ENCODE measurements at regions of chr12 and their contacts with region 1.

Region 1: DNA sequence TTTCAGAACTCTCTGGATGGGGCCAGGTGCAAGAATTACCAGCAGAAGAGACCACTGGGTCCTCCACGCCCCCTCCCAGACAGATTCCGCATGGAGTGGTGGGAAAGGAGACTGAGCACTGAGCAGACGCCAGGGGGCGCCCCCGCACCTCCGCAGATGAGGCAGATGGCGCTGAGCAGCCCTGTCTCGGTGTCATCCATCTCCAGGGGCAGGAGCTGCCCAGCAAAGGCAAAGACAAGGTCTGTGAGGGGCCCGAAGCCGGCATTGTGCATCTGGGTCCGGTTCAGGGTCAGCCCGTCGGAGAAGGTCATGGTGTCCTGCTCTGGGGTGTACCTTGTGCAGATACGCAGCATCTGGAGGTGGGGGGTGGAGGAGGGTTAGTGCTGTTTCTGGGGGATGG is 6.3 kb upstream of the ITGB7 start:
- DNase-seq: peak; percentile 81 to 91
- ATAC-seq: peak; percentile 79 to 92
- H3K4me3 ChIP-seq: no peak overlapping the region
- H3K27ac ChIP-seq: no peak overlapping the region
- H3K4me1 ChIP-seq: peaks cover 21% of the 10 kb centered on the region
- CTCF ChIP-seq: peak; percentile 97
- EP300 ChIP-seq: no peak
- POLR2A ChIP-seq: no peak
- RAD21 ChIP-seq: peak; percentile 98 to 99

Region 2: GRCh38 chr12:53098982-53099651 is 114.2 kb before region 1 on chr12:
- CTCF ChIA-PET with region 1: interaction called, 12 read pairs
- POLR2A ChIA-PET with region 1: no interaction called
- DNase-seq: peak; percentile 95 to 98
- ATAC-seq: peak; percentile 71 to 75
- H3K4me3 ChIP-seq: peak overlapping the region; percentile 54
- H3K27ac ChIP-seq: peak overlapping the region; percentile 92 to 95
- H3K4me1 ChIP-seq: peaks cover 50% of the 10 kb centered on the region
- CTCF ChIP-seq: peak; percentile 98
- EP300 ChIP-seq: no peak
- POLR2A ChIP-seq: peak; percentile 30
- RAD21 ChIP-seq: peak; percentile 95 to 96

Region 3: DNA sequence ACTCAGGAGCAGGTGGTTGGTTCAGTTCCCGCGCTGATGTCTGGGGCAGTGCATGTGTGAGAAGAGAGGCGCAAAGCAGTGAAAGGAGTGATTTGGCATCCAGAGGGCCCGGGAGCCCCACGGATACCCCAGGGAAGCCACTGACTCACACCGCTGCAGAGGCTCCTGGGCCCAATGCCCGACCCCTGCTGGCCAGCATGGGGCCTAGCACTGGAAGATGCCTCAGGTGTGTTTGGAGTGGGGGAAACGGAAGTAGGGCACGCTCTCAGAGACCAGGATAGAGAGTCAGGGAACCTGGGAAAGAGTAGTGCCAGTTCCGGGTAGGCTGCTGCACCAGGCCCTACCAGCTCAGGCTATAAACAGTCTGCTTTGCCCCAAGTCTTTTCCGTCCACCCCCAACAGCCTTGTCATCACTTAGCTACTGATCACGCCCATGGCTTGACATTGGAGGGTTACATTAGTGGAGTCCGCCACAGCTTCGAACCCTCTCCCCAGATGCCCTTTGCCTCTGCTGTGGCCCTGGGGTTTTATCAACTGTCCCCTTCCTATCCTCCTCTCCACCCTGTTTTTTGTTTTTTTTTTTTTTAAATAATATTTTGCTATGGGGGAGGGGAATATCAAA is 23.1 kb before region 1 on chr12:
- CTCF ChIA-PET with region 1: interaction called, 451 read pairs
- POLR2A ChIA-PET with region 1: no interaction called
- DNase-seq: peak; percentile 73 to 87
- ATAC-seq: peak; percentile 87 to 90
- H3K4me3 ChIP-seq: no peak overlapping the region
- H3K27ac ChIP-seq: peak overlapping the region; percentile 33 to 44; a peak in 3 of 6 replicates
- H3K4me1 ChIP-seq: peaks cover 15% of the 10 kb centered on the region; the same call in 2 of the 3 replicates
- CTCF ChIP-seq: peak; percentile 78
- EP300 ChIP-seq: no peak
- POLR2A ChIP-seq: no peak
- RAD21 ChIP-seq: peak; percentile 65 to 66; a peak in 4 of 5 replicates

Region 4: DNA sequence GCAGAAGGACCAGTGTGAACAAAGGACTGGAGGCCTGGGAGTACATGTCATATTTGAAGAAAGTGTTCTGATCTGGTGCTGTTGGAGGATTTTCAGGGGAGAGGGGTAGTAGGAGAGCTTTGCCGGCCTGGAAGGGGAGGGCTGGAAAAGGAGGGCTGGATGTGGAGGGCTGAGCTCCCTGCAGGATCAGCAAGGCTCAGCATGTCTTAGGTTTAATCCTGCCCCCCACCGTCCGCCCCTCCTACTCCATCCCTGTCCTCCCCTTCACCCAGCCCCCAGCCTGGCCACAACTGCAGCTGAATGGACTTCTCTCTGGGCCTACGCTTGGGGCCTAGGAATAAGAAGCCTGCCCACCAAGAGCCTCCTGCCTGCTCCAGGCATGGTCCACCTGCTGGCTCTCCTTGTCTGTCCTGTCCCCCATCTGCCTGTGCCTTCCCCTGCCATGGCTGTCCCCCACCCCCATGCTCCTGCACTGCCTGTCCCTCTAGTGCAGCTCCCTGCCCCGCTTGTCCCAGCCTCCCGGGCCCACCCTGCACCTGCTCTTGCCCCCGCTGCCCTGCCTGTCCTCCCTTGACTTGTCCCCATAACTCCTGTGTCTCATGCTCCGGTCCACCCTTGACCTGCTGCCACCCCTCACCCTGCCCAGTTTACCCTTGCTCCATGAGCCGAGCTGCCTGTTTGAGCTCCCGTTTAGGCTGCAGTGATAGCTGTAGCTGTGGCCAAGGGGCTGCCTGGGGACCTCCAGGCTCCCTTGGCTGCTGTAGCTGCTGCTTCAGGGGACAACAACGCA is 28.5 kb after region 1 on chr12:
- CTCF ChIA-PET with region 1: interaction called, 137 read pairs
- POLR2A ChIA-PET with region 1: no interaction called
- DNase-seq: no peak
- ATAC-seq: peak; percentile 24 to 41; a peak in 4 of 6 replicates
- H3K4me3 ChIP-seq: no peak overlapping the region
- H3K27ac ChIP-seq: no peak overlapping the region
- H3K4me1 ChIP-seq: no peaks in the 10 kb centered on the region
- CTCF ChIP-seq: no peak
- EP300 ChIP-seq: no peak
- POLR2A ChIP-seq: no peak
- RAD21 ChIP-seq: no peak

Region 5: GRCh38 chr12:53267999-53268647 is 54.8 kb after region 1 on chr12 and contains the start of gene ESPL1:
- CTCF ChIA-PET with region 1: interaction called, 216 read pairs
- POLR2A ChIA-PET with region 1: no interaction called
- DNase-seq: peak; percentile 82 to 92
- ATAC-seq: peak; percentile 92 to 94
- H3K4me3 ChIP-seq: peak within 1 kb of the TSS; percentile 65
- H3K27ac ChIP-seq: peak within 1 kb of the TSS; percentile 75 to 90
- H3K4me1 ChIP-seq: peaks cover 12% of the 10 kb centered on the region
- CTCF ChIP-seq: peak; percentile 21; the same call in 1 of the 3 replicates
- EP300 ChIP-seq: no peak
- POLR2A ChIP-seq: no peak
- RAD21 ChIP-seq: peak; percentile 41 to 47; a peak in 3 of 5 replicates
- polyA plus RNA-seq, gene ESPL1: 10.0 and 11.8 TPM in 2 replicates

Region 6: GRCh38 chr12:53308276-53308675 is 94.9 kb after region 1 on chr12:
- CTCF ChIA-PET with region 1: interaction called, 1,046 read pairs
- POLR2A ChIA-PET with region 1: no interaction called
- DNase-seq: no peak
- ATAC-seq: peak in 1 of 2 experiments; percentile 11; a peak in 2 of 6 replicates
- H3K4me3 ChIP-seq: no peak overlapping the region
- H3K27ac ChIP-seq: no peak overlapping the region
- H3K4me1 ChIP-seq: 0 out of 3 replicates have a peak, but pooled peaks cover 2% of the 10 kb centered on the region
- CTCF ChIP-seq: no peak
- EP300 ChIP-seq: no peak
- POLR2A ChIP-seq: no peak
- RAD21 ChIP-seq: no peak

Measured in A549 (cell line).